AG04449 (cell line): ENCODE measurements at regions of chr1 and their contacts with region 1.

Region 1: GRCh38 chr1:115337633-115338456 is at the start of gene NGF:
- DNase-seq: no peak
- H3K4me3 ChIP-seq: peak within 1 kb of the TSS; percentile 99
- CTCF ChIP-seq: no peak

Region 2: GRCh38 chr1:115323376-115324004 is 14.4 kb before region 1 on chr1:
- CTCF ChIA-PET with region 1: interaction called, 4 read pairs
- POLR2A ChIA-PET with region 1: interaction called, 15 read pairs
- DNase-seq: no peak
- H3K4me3 ChIP-seq: no peak overlapping the region
- CTCF ChIP-seq: no peak

Region 3: GRCh38 chr1:115364046-115364775 is 26.4 kb after region 1 on chr1:
- CTCF ChIA-PET with region 1: interaction called, 3 read pairs
- POLR2A ChIA-PET with region 1: interaction called, 11 read pairs
- DNase-seq: peak; percentile 77
- H3K4me3 ChIP-seq: no peak overlapping the region
- CTCF ChIP-seq: peak; percentile 4